ENCODE measurements at regions of chr9 and their contacts with region 1.

Region 1: DNA sequence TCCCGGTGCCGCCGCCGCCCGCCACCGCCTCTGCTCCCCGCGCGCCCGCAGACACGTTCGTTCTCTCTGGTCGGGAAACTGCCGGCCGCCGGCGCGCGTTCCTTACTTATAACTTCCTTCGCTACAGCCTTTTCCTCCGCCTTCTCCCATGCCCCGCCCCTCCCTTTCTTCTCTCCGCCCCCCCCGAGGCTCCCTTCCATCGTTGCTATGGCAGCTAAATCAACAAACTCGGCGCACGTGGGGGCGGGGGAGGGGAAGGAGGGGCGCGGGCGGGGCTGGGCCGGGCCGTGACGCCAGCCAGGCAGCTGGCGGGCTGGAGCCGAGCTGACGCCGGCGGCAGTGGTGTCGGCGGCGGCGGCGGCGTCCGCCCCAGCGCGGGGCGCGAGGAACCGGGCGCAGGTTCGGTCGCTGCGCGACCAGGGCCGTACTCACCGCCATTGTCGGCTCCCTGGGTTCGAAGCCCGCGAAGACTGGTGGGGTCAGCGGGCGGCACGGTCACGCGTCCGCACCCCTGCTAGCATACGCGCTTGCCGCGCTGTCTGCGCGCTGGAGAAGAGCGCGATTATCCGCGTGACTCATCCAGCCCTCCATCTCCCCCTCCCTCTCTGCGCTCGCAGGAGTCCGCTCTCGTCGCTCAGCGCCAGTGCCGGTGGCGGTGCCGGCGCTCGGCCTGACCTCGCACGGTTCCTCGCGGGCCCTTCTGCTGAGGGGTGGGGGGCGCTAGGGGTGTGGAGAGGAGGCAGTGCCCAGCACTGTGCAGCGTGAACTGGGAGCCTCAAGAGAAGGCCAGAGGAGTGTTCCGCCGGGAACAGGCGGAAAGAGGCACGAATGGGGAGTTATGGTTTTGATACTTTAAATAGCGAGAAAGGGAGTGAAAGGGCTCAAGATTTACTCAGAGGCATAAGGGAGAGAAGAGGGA is at the start of gene KLF4:
- DNase-seq: peak; percentile 81
- H3K4me3 Mint-ChIP-seq: peak within 1 kb of the TSS; percentile 65
- H3K27ac Mint-ChIP-seq: no peak within 1 kb of the TSS
- H3K4me1 Mint-ChIP-seq: peaks cover 7% of the 10 kb centered on the region
- H3K27me3 Mint-ChIP-seq: peaks cover 66% of the 10 kb centered on the region
- total RNA-seq, gene KLF4: 3.4 TPM

Region 2: GRCh38 chr9:107425101-107426045 is 64.6 kb before region 1 on chr9:
- CTCF ChIA-PET with region 1: no interaction called
- intact Hi-C with region 1: loop called (anchors 5 kb)
- DNase-seq: peak; percentile 58
- H3K4me3 Mint-ChIP-seq: peak overlapping the region; percentile 39
- H3K27ac Mint-ChIP-seq: no peak overlapping the region
- H3K4me1 Mint-ChIP-seq: peaks cover 8% of the 10 kb centered on the region
- H3K27me3 Mint-ChIP-seq: peaks cover 23% of the 10 kb centered on the region

Region 3: DNA sequence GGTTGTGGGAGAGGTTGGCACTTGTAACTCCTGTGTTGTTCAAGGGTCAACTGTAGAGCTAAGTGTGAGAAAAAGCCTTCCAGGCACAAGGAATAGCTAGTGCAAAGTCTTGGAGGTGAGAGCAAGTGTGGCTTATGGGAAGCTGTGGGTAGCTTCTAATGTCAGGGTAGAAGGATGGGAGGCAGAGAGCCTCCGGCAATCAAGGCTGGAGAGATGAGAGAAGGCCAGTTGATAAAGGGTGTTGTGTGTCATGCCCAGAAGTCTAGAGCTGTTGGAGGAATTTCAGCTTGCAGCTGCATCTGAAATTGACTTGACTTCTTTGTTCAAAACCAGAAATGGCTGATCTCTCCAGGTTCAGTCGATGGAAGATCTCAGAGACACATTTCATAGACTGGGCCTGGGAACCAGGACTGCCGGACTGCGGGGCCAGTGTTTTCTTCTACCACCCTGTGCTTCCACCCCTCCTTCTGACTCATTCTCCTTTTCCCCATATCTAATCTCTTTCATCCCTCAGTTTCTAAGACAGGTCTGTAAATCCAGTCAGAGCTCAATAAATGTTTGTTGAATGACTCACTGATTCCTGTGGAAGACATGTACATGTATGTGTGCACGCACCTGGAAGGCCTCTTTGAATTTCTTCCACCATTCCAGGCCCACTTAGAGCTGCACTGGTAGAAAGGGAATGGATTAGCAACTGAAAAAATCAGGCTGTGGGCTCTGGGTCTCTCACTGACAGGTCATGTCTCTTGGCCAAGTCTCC is 67.5 kb after region 1 on chr9:
- CTCF ChIA-PET with region 1: no interaction called
- intact Hi-C with region 1: no loop called
- DNase-seq: no peak
- H3K4me3 Mint-ChIP-seq: no peak overlapping the region
- H3K27ac Mint-ChIP-seq: no peak overlapping the region
- H3K4me1 Mint-ChIP-seq: no peaks in the 10 kb centered on the region
- H3K27me3 Mint-ChIP-seq: no peaks in the 10 kb centered on the region

Region 4: GRCh38 chr9:108439911-108440315 is 950.0 kb after region 1 on chr9:
- CTCF ChIA-PET with region 1: no interaction called
- intact Hi-C with region 1: loop called (anchors 10 kb)
- DNase-seq: no peak
- H3K4me3 Mint-ChIP-seq: no peak overlapping the region
- H3K27ac Mint-ChIP-seq: no peak overlapping the region
- H3K4me1 Mint-ChIP-seq: no peaks in the 10 kb centered on the region
- H3K27me3 Mint-ChIP-seq: no peaks in the 10 kb centered on the region

Region 5: GRCh38 chr9:108478431-108478837 is 988.5 kb after region 1 on chr9:
- CTCF ChIA-PET with region 1: no interaction called
- intact Hi-C with region 1: loop called (anchors 10 kb)
- DNase-seq: peak; percentile 9
- H3K4me3 Mint-ChIP-seq: no peak overlapping the region
- H3K27ac Mint-ChIP-seq: no peak overlapping the region
- H3K4me1 Mint-ChIP-seq: peaks cover 3% of the 10 kb centered on the region
- H3K27me3 Mint-ChIP-seq: no peaks in the 10 kb centered on the region

Region 6: GRCh38 chr9:109401168-109401989 is 1911.4 kb after region 1 on chr9:
- CTCF ChIA-PET with region 1: no interaction called
- intact Hi-C with region 1: loop called (anchors 10 kb)
- DNase-seq: peak; percentile 75
- H3K4me3 Mint-ChIP-seq: no peak overlapping the region
- H3K27ac Mint-ChIP-seq: no peak overlapping the region
- H3K4me1 Mint-ChIP-seq: peaks cover 8% of the 10 kb centered on the region
- H3K27me3 Mint-ChIP-seq: peaks cover 20% of the 10 kb centered on the region